ENCODE measurements at regions of chr5 and their contacts with region 1.

Region 1: GRCh38 chr5:132753135-132753987 is 6.1 kb downstream of the CCNI2 start:
- DNase-seq: no peak
- H3K4me3 ChIP-seq: no peak overlapping the region
- H3K27ac ChIP-seq: no peak overlapping the region
- H3K4me1 ChIP-seq: no peaks in the 10 kb centered on the region
- H3K27me3 ChIP-seq: peaks cover 0 to 23% (median 5%) of the 10 kb centered on the region in 5 experiments

Region 2: DNA sequence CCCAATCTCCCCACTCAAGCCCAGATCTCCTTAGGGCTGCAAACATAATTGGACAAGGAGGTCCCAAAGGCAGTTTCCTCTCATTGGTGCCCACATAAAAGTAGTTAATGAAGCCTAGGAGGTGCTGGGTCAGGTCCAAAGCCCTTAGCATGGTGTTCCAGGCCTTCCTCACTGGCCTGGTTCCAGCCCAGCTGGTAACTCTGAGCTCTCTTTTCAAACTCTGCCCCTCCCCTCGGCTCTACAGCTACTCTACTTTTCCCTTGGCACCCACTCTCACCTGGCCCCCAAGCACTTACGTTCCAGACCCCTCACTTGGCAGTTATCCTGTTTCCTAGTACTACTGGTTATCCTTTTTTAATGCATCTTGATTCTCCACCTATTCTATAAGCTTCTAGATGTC is 13.8 kb after region 1 on chr5:
- CTCF ChIA-PET with region 1: interaction called, 42 read pairs
- POLR2A ChIA-PET with region 1: interaction called, 3 read pairs
- DNase-seq: no peak
- H3K4me3 ChIP-seq: no peak overlapping the region
- H3K27ac ChIP-seq: no peak overlapping the region
- H3K4me1 ChIP-seq: peaks cover 0 to 6% (median 2%) of the 10 kb centered on the region in 4 experiments
- H3K27me3 ChIP-seq: peaks cover 0 to 4% (median 0%) of the 10 kb centered on the region in 5 experiments

Region 3: GRCh38 chr5:132776131-132776937 is 23.0 kb after region 1 on chr5:
- CTCF ChIA-PET with region 1: interaction called, 10 read pairs
- POLR2A ChIA-PET with region 1: no interaction called
- DNase-seq: peak in 2 of 3 donors; percentile 24 to 41
- H3K4me3 ChIP-seq: peak overlapping the region; percentile 51 to 81 (median 66)
- H3K27ac ChIP-seq: peak overlapping the region in 1 of 2 experiments; percentile 56
- H3K4me1 ChIP-seq: peaks cover 0 to 18% (median 16%) of the 10 kb centered on the region in 4 experiments
- H3K27me3 ChIP-seq: peaks cover 3 to 60% (median 41%) of the 10 kb centered on the region in 5 experiments

Region 4: GRCh38 chr5:132790201-132790865 is 37.0 kb after region 1 on chr5:
- CTCF ChIA-PET with region 1: interaction called, 13 read pairs
- POLR2A ChIA-PET with region 1: no interaction called
- DNase-seq: no peak
- H3K4me3 ChIP-seq: no peak overlapping the region
- H3K27ac ChIP-seq: no peak overlapping the region
- H3K4me1 ChIP-seq: no peaks in the 10 kb centered on the region
- H3K27me3 ChIP-seq: peaks cover 0 to 10% (median 2%) of the 10 kb centered on the region in 5 experiments

Region 5: DNA sequence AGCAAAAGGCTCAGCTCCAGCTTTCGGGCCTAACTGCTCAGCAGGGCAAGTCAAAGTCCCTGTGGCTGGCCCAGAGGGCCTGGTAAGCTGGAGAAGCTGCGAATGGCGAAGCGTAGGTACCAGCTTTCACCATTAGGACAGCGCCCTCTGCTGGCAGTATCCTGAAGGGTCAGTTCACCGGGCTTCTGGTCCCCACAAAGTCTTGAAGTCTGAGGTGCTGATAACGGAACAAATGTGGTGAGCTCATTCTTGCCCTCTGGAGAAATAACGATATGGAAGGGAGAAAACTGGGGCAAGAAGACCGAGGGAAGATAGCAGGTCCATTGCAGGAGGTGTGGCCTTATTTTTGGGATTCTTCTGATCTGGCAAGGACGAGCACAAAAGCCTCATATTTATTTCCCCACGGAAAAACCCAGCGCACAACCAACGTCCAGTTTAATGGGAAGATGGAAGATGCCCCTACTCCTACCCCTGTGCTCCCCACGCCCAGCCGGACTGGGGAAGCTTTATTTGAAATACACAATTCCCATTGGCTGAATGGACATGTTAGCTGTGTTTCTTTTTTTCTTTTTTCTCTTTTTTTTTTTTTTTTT is 66.9 kb after region 1 on chr5:
- CTCF ChIA-PET with region 1: interaction called, 74 read pairs
- POLR2A ChIA-PET with region 1: no interaction called
- DNase-seq: peak; percentile 92 to 96 (median 94)
- H3K4me3 ChIP-seq: peak overlapping the region in 2 of 7 experiments; percentile 71 to 72
- H3K27ac ChIP-seq: no peak overlapping the region
- H3K4me1 ChIP-seq: peaks cover 0 to 22% (median 13%) of the 10 kb centered on the region in 4 experiments
- H3K27me3 ChIP-seq: peaks cover 0 to 56% (median 28%) of the 10 kb centered on the region in 5 experiments

Region 6: DNA sequence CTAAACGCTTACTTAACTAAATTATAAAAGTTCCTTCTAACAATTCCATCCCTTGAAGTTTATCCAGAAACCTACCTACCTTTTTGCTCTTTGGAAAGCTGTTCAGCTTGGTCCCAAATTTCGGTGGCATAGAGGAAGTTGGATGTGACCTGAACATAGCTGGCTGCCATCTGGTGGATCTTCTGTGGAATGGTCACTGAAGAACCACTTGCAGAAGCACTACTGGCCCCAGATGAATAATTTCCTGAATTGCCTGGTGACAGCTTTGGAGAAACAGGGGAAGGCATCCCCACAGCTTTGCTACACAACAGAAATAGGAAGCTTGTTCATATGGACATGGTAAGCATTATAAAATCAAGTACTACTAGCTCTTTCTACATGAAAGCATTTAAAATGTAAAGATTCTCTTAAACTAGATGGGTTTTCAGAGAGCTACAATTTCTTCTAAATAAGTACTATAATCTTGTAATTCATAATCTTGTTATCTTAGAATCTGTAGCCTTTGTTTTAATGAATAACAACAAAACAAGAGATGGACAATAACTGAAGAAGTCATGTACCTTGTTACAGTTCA is 130.0 kb after region 1 on chr5:
- CTCF ChIA-PET with region 1: interaction called, 22 read pairs
- POLR2A ChIA-PET with region 1: interaction called, 3 read pairs
- DNase-seq: peak; percentile 72 to 84 (median 83)
- H3K4me3 ChIP-seq: no peak overlapping the region
- H3K27ac ChIP-seq: no peak overlapping the region
- H3K4me1 ChIP-seq: peaks cover 0 to 3% (median 1%) of the 10 kb centered on the region in 4 experiments
- H3K27me3 ChIP-seq: no peaks in the 10 kb centered on the region

Region 7: GRCh38 chr5:133025804-133026663 is 272.7 kb after region 1 on chr5 and contains the start of gene ZCCHC10:
- CTCF ChIA-PET with region 1: no interaction called
- POLR2A ChIA-PET with region 1: no interaction called
- DNase-seq: peak; percentile 95 to 97 (median 97)
- H3K4me3 ChIP-seq: peak within 1 kb of the TSS; percentile 76 to 98 (median 94)
- H3K27ac ChIP-seq: peak within 1 kb of the TSS; percentile 94 to 97
- H3K4me1 ChIP-seq: peaks cover 8 to 17% (median 11%) of the 10 kb centered on the region in 4 experiments
- H3K27me3 ChIP-seq: no peaks in the 10 kb centered on the region